ENCODE measurements at regions of chr7 and their contacts with region 1.

Region 1: DNA sequence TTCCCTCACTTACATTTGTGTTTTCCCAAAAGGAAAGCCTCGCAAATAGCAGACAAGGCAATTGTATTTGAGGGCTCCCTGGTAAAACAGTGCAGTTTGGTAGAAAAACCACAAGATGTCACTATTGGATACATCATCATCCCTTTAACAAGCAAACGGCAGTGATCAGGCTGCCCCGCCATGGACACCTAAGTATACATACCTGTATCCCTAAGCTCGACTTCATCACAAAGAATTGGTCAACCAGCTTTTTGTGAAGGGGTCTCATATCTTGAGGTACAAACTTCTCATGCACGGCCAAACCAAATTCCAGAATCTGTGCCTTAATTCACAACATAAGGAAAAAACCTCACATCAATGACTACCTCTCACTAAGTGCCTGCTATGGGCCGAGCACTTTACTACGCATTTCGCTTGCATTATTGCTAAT is 179.5 kb upstream of the IMMP2L start:
- DNase-seq: peak; percentile 63 to 70
- H3K4me3 ChIP-seq: no peak overlapping the region
- H3K4me1 ChIP-seq: peaks cover 2% of the 10 kb centered on the region; the same call in 1 of the 2 replicates
- H3K27me3 ChIP-seq: no peaks in the 10 kb centered on the region

Region 2: GRCh38 chr7:111229916-111230315 is 511.9 kb before region 1 on chr7:
- in situ Hi-C with region 1: no loop called
- DNase-seq: no peak
- H3K4me3 ChIP-seq: no peak overlapping the region
- H3K4me1 ChIP-seq: no peaks in the 10 kb centered on the region
- H3K27me3 ChIP-seq: no peaks in the 10 kb centered on the region

Region 3: DNA sequence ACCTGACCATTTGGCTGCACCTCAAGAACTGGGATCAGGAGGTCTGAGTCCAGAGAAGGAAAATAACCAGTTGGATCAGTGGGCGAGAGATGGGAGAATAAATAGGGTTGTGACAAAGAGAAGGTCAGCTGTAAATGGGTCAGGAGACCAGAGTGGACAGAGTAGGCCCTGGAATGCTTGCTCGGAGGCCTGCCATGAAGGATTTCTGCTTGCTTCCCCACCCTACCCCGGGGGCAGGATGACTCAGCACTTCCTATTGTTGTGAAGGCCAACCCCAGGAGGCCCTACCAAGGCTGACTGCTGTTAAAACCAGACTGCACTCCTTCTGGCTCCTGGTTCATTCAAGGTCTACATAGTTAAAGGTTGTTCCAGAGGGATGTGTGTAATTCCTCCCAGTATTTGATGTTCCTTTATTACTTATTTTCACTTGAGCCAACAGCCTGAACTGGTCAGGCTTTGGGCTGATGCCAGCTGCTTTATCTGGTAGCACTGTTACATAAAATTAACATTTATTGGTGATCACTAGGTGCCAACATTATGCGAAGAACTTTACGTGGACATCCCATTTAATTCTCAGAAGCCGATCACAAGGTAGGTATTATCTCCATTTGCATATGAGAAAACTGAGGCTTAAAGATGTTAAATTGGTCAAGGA is 681.1 kb after region 1 on chr7:
- in situ Hi-C with region 1: loop called (anchors 10 kb)
- DNase-seq: peak; percentile 75 to 94
- H3K4me3 ChIP-seq: no peak overlapping the region
- H3K4me1 ChIP-seq: peaks cover 36% of the 10 kb centered on the region
- H3K27me3 ChIP-seq: no peaks in the 10 kb centered on the region

Region 4: DNA sequence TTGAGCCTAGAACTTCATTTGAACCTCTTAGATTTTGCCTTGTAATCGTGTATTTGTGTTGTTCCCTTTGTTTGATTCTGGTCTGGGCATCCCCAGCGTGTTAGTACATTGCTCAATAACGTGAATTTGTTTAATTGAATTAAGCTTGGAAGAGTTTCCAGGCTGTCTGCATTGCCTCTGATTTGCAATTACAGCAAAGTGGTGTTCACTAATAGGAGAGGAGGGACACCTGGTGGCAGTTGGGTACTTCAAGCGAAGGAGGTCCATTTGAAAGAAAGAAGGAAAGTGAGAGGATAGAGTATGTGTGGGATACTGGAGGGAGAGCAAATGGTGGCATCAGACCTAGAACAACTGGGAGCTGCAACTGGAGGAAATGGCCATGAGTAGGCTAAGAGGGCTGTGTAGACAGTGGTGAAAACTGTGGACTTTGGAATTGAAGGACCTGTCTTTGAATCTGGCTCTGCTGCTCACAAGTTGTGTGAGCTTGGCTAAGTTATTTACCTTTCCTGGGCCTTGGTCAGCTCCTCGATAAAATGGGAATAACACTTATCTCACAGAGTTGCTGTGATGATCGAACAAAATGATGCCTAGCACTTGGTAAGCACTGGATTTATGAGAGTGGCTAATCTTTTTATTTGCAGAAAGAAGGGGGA is 754.1 kb after region 1 on chr7:
- in situ Hi-C with region 1: loop called (anchors 10 kb)
- DNase-seq: peak; percentile 25 to 57
- H3K4me3 ChIP-seq: no peak overlapping the region
- H3K4me1 ChIP-seq: no peaks in the 10 kb centered on the region
- H3K27me3 ChIP-seq: no peaks in the 10 kb centered on the region

Measured in HAP-1 (cell line).